Testis (tissue), 5 donors: ENCODE measurements at regions of chr10 and their contacts with region 1.

Region 1: GRCh38 chr10:78972947-78973900 is 95.5 kb upstream of the ZMIZ1 start:
- DNase-seq: peak; percentile 74
- H3K4me3 ChIP-seq: peak overlapping the region; percentile 46 to 54
- H3K27ac ChIP-seq: peak overlapping the region; percentile 89 to 91
- H3K4me1 ChIP-seq: peaks cover 36% of the 10 kb centered on the region
- H3K27me3 ChIP-seq: no peaks in the 10 kb centered on the region
- CTCF ChIP-seq: no peak
- POLR2A ChIP-seq: no peak

Region 2: GRCh38 chr10:78777466-78777865 is 195.8 kb before region 1 on chr10:
- intact Hi-C with region 1: loop called (anchors 10 kb)
- DNase-seq: peak; percentile 77
- H3K4me3 ChIP-seq: no peak overlapping the region
- H3K27ac ChIP-seq: peak overlapping the region in 1 of 2 donors; percentile 56
- H3K4me1 ChIP-seq: peaks cover 21% of the 10 kb centered on the region
- H3K27me3 ChIP-seq: no peaks in the 10 kb centered on the region
- CTCF ChIP-seq: no peak
- POLR2A ChIP-seq: no peak

Region 3: GRCh38 chr10:79068562-79069324 is 95.5 kb after region 1 on chr10 and contains the start of gene ZMIZ1:
- intact Hi-C with region 1: loop called (anchors 5 kb)
- DNase-seq: peak; percentile 91
- H3K4me3 ChIP-seq: peak within 1 kb of the TSS; percentile 83 to 84
- H3K27ac ChIP-seq: peak within 1 kb of the TSS; percentile 88
- H3K4me1 ChIP-seq: peaks cover 36% of the 10 kb centered on the region
- H3K27me3 ChIP-seq: no peaks in the 10 kb centered on the region
- CTCF ChIP-seq: peak in 2 of 3 experiments; percentile 0 to 8
- POLR2A ChIP-seq: no peak
- total RNA-seq, gene ZMIZ1: 18.8 to 22.0 TPM